Activated CD8-positive, alpha-beta memory T cell treated with anti-CD3 and anti-CD28 coated beads, Interleukin-2, amount 10 ng/mL, durations not matched to agents 7 days and 5 days (primary cell): ENCODE measurements at regions of chr6 and their contacts with region 1.

Region 1: DNA sequence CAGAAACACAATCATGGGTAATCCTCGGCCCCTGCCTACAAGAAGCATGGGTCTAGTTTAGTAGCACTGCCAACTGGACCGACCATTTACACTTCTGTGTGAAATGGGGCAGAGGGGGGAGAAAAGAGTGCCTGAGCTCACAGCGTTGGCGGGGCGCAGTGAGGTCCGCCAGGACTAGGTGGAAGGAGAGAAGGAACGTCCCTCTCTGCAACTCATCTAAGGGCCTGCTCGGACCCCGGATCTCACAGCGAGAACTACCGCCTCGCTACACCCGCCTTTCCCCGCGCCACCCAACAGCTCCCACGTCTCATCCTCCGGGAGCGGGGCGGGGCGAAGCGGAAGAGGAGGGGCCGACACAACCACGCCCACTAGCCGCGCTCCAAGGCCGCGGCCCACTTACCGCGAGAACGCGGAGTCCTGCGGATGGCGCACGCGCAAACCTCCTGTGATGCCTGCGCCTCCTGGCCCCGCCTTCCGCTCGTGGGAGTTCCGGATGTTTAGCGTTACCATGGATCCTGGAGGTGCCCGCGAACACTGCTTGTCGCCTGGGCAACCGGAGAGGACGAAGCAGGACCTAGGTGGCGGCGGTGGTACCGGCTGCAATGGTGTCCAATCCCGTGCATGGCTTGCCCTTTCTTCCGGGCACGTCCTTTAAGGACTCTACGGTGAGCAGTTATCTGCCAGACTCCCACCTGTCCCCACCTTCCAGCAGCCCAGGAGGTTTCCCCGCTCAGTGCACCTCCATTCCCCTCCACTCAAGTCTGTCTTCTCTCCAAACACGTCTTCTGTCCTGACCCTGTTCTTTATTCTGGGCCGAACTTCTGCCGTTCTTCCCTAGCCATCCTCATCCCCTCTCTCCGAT is at the start of gene EFHC1:
- DNase-seq: peak; percentile 98
- ATAC-seq: peak; percentile 90
- H3K4me3 Mint-ChIP-seq: no peak within 1 kb of the TSS
- H3K27ac Mint-ChIP-seq: no peak within 1 kb of the TSS
- H3K4me1 Mint-ChIP-seq: peaks cover 20% of the 10 kb centered on the region
- H3K27me3 Mint-ChIP-seq: no peaks in the 10 kb centered on the region
- total RNA-seq, gene EFHC1: 1.7 to 2.1 TPM

Region 2: GRCh38 chr6:52389626-52390360 is 30.2 kb before region 1 on chr6:
- CTCF ChIA-PET with region 1: interaction called, 13 read pairs
- DNase-seq: peak; percentile 76
- ATAC-seq: peak; percentile 65
- H3K4me3 Mint-ChIP-seq: peak overlapping the region; percentile 60
- H3K27ac Mint-ChIP-seq: peak overlapping the region; percentile 94
- H3K4me1 Mint-ChIP-seq: peaks cover 67% of the 10 kb centered on the region
- H3K27me3 Mint-ChIP-seq: no peaks in the 10 kb centered on the region

Region 3: GRCh38 chr6:52664186-52664990 is 244.3 kb after region 1 on chr6:
- CTCF ChIA-PET with region 1: interaction called, 51 read pairs
- DNase-seq: peak; percentile 90
- ATAC-seq: peak; percentile 98
- H3K4me3 Mint-ChIP-seq: no peak overlapping the region
- H3K27ac Mint-ChIP-seq: no peak overlapping the region
- H3K4me1 Mint-ChIP-seq: peaks cover 22% of the 10 kb centered on the region
- H3K27me3 Mint-ChIP-seq: no peaks in the 10 kb centered on the region